Caco-2 (cell line): ENCODE measurements at regions of chr3 and their contacts with region 1.

Region 1: GRCh38 chr3:68893600-68894239 is 38.6 kb downstream of the TAFA4 start:
- DNase-seq: peak in 1 of 2 experiments; percentile 10
- H3K4me3 ChIP-seq: no peak overlapping the region
- H3K4me3 Mint-ChIP-seq: no peak overlapping the region
- H3K27ac Mint-ChIP-seq: no peak overlapping the region
- H3K4me1 ChIP-seq: no peaks in the 10 kb centered on the region
- H3K4me1 Mint-ChIP-seq: no peaks in the 10 kb centered on the region
- H3K27me3 ChIP-seq: no peaks in the 10 kb centered on the region
- H3K27me3 Mint-ChIP-seq: peaks cover 20% of the 10 kb centered on the region
- CTCF ChIP-seq: peak; percentile 23 to 35

Region 2: GRCh38 chr3:68912376-68912775 is 18.7 kb after region 1 on chr3:
- CTCF ChIA-PET with region 1: no interaction called
- POLR2A ChIA-PET with region 1: no interaction called
- intact Hi-C with region 1: no loop called
- DNase-seq: no peak
- H3K4me3 ChIP-seq: no peak overlapping the region
- H3K4me3 Mint-ChIP-seq: no peak overlapping the region
- H3K27ac Mint-ChIP-seq: no peak overlapping the region
- H3K4me1 ChIP-seq: no peaks in the 10 kb centered on the region
- H3K4me1 Mint-ChIP-seq: no peaks in the 10 kb centered on the region
- H3K27me3 ChIP-seq: peaks cover 3% of the 10 kb centered on the region; the same call in 1 of the 2 replicates
- H3K27me3 Mint-ChIP-seq: peaks cover 30% of the 10 kb centered on the region
- CTCF ChIP-seq: no peak

Region 3: DNA sequence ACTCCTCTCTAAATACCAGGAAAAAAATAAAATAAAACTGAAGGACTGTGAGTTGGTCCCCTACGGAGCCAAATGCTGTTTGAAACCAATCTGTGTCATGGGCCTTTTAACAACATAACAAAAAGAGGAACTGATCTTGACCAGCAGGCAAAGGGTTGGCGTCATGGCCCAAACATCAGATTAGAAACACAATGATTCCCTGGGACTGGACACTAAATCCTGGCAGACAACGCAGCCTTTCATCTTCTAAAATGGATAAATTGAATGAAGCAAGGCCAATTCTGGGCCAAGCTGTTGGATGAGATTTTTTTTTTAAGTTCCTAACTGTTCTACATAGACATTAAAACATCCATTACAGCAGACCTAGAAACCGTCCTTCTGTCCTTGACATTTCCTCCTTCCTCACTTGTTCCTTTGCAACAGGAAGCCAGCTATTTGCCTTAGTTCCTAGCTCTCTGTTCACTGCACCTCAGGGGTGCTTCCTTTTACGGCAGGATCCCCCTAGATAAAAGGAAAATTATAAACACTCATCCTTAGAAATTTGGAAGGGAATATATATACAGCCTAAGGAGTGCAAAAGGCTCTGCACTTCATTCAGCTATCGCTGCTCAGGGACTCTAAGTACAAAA is 60.2 kb after region 1 on chr3:
- CTCF ChIA-PET with region 1: no interaction called
- POLR2A ChIA-PET with region 1: no interaction called
- intact Hi-C with region 1: loop called (anchors 1 kb)
- DNase-seq: no peak
- H3K4me3 ChIP-seq: no peak overlapping the region
- H3K4me3 Mint-ChIP-seq: no peak overlapping the region
- H3K27ac Mint-ChIP-seq: no peak overlapping the region
- H3K4me1 ChIP-seq: no peaks in the 10 kb centered on the region
- H3K4me1 Mint-ChIP-seq: no peaks in the 10 kb centered on the region
- H3K27me3 ChIP-seq: no peaks in the 10 kb centered on the region
- H3K27me3 Mint-ChIP-seq: peaks cover 20% of the 10 kb centered on the region
- CTCF ChIP-seq: no peak

Region 4: GRCh38 chr3:68972358-68972979 is 78.7 kb after region 1 on chr3:
- CTCF ChIA-PET with region 1: no interaction called
- POLR2A ChIA-PET with region 1: no interaction called
- intact Hi-C with region 1: loop called (anchors 1 kb)
- DNase-seq: peak; percentile 59 to 70
- H3K4me3 ChIP-seq: no peak overlapping the region
- H3K4me3 Mint-ChIP-seq: no peak overlapping the region
- H3K27ac Mint-ChIP-seq: no peak overlapping the region
- H3K4me1 ChIP-seq: no peaks in the 10 kb centered on the region
- H3K4me1 Mint-ChIP-seq: no peaks in the 10 kb centered on the region
- H3K27me3 ChIP-seq: no peaks in the 10 kb centered on the region
- H3K27me3 Mint-ChIP-seq: peaks cover 16% of the 10 kb centered on the region
- CTCF ChIP-seq: peak; percentile 71 to 86

Region 5: GRCh38 chr3:68996356-68996995 is 102.8 kb after region 1 on chr3:
- CTCF ChIA-PET with region 1: no interaction called
- POLR2A ChIA-PET with region 1: no interaction called
- intact Hi-C with region 1: no loop called
- DNase-seq: no peak
- H3K4me3 ChIP-seq: no peak overlapping the region
- H3K4me3 Mint-ChIP-seq: no peak overlapping the region
- H3K27ac Mint-ChIP-seq: no peak overlapping the region
- H3K4me1 ChIP-seq: no peaks in the 10 kb centered on the region
- H3K4me1 Mint-ChIP-seq: no peaks in the 10 kb centered on the region
- H3K27me3 ChIP-seq: no peaks in the 10 kb centered on the region
- H3K27me3 Mint-ChIP-seq: no peaks in the 10 kb centered on the region
- CTCF ChIP-seq: no peak

Region 6: GRCh38 chr3:69020424-69020823 is 126.7 kb after region 1 on chr3:
- CTCF ChIA-PET with region 1: no interaction called
- POLR2A ChIA-PET with region 1: no interaction called
- intact Hi-C with region 1: no loop called
- DNase-seq: no peak
- H3K4me3 ChIP-seq: no peak overlapping the region
- H3K4me3 Mint-ChIP-seq: no peak overlapping the region
- H3K27ac Mint-ChIP-seq: no peak overlapping the region
- H3K4me1 ChIP-seq: no peaks in the 10 kb centered on the region
- H3K4me1 Mint-ChIP-seq: no peaks in the 10 kb centered on the region
- H3K27me3 ChIP-seq: no peaks in the 10 kb centered on the region
- H3K27me3 Mint-ChIP-seq: no peaks in the 10 kb centered on the region
- CTCF ChIP-seq: peak; percentile 33 to 45